Gastrocnemius medialis (tissue), 4 donors: ENCODE measurements at regions of chr7 and their contacts with region 1.

Region 1: GRCh38 chr7:73522105-73522872 is at the start of gene BAZ1B:
- DNase-seq: peak; percentile 98 to 99
- ATAC-seq: peak; percentile 95 to 96
- H3K4me3 ChIP-seq: peak within 1 kb of the TSS; percentile 70 to 84 (median 80)
- H3K27ac ChIP-seq: peak within 1 kb of the TSS; percentile 88 to 97 (median 94)
- H3K4me1 ChIP-seq: peaks cover 32 to 41% of the 10 kb centered on the region in 2 donors
- H3K27me3 ChIP-seq: no peaks in the 10 kb centered on the region
- CTCF ChIP-seq: peak in 3 of 5 experiments; percentile 19 to 28 (median 25)
- POLR2A ChIP-seq: peak; percentile 83 to 91
- total RNA-seq, gene BAZ1B: 31.2 to 47.0 (median 42.0) TPM

Region 2: DNA sequence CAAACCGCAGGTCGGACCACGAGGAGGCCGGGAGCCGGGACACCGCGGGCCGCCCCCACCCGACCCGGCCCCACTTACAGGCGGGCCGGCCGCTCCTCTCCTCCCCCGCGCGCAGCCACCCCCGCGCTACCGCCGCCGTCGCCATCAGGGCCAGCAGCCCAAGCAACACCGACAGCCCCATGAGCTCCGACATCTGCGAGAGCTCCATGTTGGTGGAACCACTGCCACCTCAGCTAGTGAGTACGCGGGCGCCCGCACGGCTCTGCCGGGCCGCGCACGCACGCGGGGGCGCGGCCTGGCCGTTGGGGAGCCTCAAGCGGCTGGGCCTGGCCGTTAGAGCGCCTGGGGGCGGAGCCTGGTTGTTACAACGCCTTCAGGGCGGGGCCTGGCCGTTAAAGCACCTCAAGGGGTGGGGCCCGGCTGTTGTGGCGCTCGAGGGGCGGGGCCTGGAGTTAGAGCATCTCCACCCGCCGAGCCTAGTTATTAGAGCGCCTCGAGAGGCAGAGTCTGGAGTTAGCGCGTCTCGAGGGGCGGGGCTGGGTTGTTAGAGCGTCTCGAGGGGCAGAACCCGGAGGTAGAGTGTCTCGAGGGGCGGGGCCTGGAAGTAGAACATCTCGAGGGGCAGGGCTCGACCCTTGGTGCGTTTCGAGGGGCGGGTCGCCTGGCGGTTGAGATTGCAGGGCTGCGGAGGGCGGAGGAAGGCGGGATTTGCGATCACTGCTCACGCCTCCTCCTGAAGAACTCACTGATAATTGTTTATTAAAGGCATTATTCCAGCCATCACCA is 56.2 kb after region 1 on chr7 and contains the start of gene TBL2:
- in situ Hi-C with region 1: no loop called
- intact Hi-C with region 1: loop called (anchors 1 kb)
- DNase-seq: peak; percentile 97 to 99
- ATAC-seq: peak; percentile 90 to 91
- H3K4me3 ChIP-seq: peak within 1 kb of the TSS; percentile 68 to 97 (median 84)
- H3K27ac ChIP-seq: peak within 1 kb of the TSS; percentile 81 to 94 (median 88)
- H3K4me1 ChIP-seq: peaks cover 13 to 18% of the 10 kb centered on the region in 2 donors
- H3K27me3 ChIP-seq: no peaks in the 10 kb centered on the region
- CTCF ChIP-seq: peak in 2 of 5 experiments; percentile 23 to 31
- POLR2A ChIP-seq: peak; percentile 90 to 93
- total RNA-seq, gene TBL2: 14.4 to 32.9 (median 22.0) TPM

Region 3: DNA sequence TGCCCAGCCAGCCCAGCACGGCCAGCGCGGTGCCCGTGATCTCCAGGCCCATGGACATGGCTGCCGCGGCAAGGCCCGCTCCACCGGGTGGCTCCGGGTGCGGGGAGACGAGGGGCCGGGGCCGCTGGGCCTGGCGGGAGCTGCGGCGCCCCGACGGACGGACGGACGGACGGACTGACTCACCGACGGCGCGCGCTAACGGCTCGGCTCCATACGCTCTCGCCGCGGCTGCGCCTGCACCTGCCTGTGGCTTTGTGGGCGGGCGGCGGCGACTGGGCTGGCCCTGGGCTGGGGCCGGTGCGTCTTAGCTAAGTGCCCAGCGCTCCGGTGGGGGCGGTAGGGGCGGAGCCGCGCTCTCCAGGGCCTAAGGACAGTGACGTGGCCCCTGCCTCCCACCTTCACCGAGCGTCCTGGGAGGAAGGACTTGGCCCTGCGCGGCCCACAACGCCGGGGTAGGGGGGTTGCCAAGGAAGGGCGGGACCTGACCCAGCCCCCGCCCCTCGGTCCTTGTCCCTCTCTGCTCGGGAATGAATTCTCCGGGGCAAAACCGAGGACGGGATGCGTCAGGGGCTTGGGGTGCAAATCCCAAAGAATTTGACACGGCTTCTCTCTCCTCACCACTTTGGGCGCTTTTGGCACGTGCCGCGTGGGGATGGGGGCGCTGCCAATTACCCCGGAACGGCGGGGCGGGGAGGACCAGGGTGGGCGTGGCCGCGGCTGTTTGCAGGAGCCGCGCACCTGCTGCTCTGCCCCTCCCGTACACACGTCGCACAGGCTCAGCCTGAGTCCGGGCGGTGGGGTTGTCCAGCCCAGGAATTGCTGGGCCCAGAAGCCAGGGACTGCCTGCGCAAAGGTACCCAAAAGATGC is 247.9 kb after region 1 on chr7 and contains the start of gene CLDN3:
- in situ Hi-C with region 1: no loop called
- intact Hi-C with region 1: no loop called
- DNase-seq: no peak
- ATAC-seq: no peak
- H3K4me3 ChIP-seq: peak within 1 kb of the TSS in 2 of 4 donors; percentile 6 to 20
- H3K27ac ChIP-seq: no peak within 1 kb of the TSS
- H3K4me1 ChIP-seq: peaks cover 0 to 5% of the 10 kb centered on the region in 2 donors
- H3K27me3 ChIP-seq: peaks cover 33 to 58% (median 51%) of the 10 kb centered on the region in 3 donors
- CTCF ChIP-seq: no peak
- POLR2A ChIP-seq: no peak
- total RNA-seq, gene CLDN3: 5.0 TPM in 1 of 4 donors, not detected in the others